AG04449 (cell line): ENCODE measurements at regions of chr10 and their contacts with region 1.

Region 1: DNA sequence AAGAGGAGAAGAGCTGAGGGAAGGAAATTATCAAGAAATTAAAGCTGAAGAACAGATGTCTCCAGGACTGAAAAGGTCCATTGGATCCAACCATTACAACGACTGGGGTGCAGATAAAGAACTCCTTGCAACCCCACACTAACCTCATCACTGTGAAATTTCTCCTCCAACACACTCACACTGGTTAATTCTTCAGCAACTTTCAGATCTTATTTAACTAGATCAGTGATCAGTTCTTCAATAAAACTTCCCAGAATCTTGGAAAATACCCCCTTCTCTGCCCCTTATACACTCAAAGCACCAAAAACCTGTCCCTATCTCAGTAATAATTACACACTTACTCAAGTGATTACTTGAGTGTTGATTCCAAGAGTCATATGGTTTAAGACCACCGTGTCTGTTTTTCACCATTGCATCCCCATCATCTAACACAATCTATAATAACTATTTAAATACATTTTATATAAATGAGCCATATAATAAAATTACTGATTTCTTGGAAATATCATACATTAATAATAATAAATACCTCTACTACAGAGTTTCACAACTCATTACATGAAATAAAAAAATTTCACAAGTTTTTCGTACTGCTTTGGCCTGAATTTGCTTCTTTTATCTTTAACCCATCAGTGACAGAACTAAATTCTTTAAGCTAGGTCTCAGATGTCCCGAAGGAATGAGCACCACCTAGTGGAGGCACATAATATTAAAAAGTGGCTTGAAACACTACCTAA is 123.7 kb downstream of the MPP7 start:
- DNase-seq: no peak
- H3K4me3 ChIP-seq: no peak overlapping the region
- CTCF ChIP-seq: peak; percentile 30

Region 2: DNA sequence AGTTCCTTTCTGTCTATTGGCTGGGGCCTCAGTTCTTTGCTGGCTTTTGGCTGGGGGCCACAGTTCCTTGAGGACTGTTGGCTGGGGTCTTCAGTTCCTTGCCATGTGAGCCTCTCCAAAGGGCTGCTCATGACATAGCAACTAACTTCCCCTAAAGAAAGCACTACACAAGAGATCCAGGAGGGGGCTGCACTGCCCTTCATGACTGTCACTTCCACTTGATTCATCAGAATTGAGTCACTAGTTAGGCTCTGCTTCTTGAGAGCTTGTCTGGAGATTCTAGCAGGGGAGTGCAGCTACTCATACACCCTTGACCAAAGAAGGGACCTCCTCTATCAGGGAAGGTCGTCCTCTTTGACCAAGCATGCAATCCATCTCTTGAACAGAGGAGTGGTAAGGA is 395.5 kb before region 1 on chr10:
- CTCF ChIA-PET with region 1: interaction called, 19 read pairs
- POLR2A ChIA-PET with region 1: no interaction called
- DNase-seq: peak; percentile 23
- H3K4me3 ChIP-seq: no peak overlapping the region
- CTCF ChIP-seq: peak; percentile 62

Region 3: DNA sequence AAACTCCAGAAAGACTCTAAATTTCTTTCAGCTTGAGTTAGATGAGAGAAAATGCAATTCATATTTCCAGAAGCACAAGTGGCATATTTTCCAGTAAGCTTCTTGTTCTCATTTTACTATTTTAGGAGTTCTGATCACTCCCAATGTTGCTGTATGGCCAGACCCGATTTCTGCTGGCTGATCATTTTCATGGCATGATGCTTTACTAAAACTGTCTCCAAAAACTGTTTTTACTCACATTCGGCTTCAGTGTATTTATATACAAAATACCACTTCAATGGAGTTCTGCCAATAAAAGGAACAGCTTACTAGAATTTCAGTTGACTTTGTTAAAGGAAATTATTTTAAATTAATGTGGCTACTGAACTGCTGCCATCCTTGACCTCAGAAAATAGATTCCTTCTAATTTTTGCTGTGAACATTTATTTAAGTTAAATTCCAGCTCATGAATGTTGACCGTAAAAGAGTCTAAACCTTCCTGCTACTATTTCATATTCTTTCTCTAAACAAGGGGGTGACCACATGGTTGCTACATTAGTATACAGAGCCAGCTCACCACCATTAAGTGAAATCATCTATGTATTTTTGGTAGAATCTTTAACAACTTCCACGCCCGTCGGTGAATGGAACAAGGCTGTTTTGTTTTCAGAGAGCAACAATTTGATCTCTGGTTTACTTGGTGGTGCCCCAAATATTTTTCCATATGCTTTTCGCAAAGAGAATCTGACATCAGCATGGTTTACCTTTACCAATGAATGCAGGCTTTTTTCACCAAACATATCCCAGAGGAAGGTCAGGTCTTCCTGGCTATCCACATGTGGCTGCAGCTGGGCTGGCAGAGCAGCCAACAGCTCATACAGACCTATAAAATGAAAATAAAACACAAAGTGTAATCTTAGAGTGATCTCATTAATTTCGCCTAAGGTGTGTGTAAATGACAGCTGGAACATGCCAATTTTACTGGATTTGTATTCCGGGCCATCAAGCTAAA is 22.5 kb after region 1 on chr10:
- CTCF ChIA-PET with region 1: interaction called, 13 read pairs
- POLR2A ChIA-PET with region 1: no interaction called
- DNase-seq: no peak
- H3K4me3 ChIP-seq: no peak overlapping the region
- CTCF ChIP-seq: no peak

Region 4: GRCh38 chr10:28266449-28267224 is 87.5 kb after region 1 on chr10:
- CTCF ChIA-PET with region 1: no interaction called
- POLR2A ChIA-PET with region 1: no interaction called
- DNase-seq: no peak
- H3K4me3 ChIP-seq: no peak overlapping the region
- CTCF ChIP-seq: no peak

Region 5: DNA sequence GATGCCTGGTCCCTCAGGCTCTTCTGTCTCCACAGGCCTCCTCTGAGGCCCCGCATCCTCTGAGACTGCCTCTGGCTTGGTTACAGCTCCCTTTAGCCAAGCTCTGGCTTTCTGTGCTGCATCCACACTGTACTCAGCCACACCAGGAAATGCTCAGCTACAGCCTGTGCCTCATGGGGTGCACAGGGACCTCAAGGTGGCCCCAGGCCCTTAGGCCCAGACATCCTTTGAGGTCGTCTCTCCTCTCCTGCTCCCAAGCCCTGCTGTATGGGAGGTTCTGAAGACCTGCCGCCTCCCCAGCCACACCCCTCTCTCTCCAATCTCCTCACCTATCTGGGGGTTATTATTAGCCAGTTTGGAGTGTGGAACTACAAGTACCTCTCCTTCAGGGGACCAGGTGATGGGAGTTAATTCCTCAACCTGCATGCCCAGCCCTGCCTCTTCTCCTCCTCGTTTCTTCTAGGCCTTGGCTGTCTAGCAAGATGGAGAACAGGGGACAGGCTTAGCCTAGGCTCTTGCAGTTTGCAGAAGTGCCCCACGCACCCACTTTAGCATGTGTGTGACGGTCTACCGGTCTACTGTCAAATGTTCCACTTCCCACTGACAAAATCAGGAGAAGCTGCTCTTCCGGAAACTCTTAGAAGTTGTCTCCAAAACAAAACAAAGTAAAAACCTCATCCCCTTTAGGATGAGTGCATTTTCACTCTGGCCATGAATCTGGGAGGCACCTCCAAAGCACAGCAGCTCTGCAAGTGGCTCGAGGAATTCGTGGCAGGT is 289.7 kb after region 1 on chr10:
- CTCF ChIA-PET with region 1: no interaction called
- POLR2A ChIA-PET with region 1: no interaction called
- DNase-seq: no peak
- H3K4me3 ChIP-seq: no peak overlapping the region
- CTCF ChIP-seq: no peak